Activated naive CD4-positive, alpha-beta T cell treated with anti-CD3 and anti-CD28 coated beads, Interleukin-2, amount 10 ng/mL, durations not matched to agents 7 days and 5 days (primary cell): ENCODE measurements at regions of chr1 and their contacts with region 1.

Region 1: GRCh38 chr1:156129706-156130581 is 15.4 kb downstream of the LMNA start:
- DNase-seq: peak; percentile 87
- H3K4me3 Mint-ChIP-seq: no peak overlapping the region
- H3K27ac Mint-ChIP-seq: no peak overlapping the region
- H3K4me1 Mint-ChIP-seq: peaks cover 51% of the 10 kb centered on the region
- H3K27me3 Mint-ChIP-seq: peaks cover 54% of the 10 kb centered on the region

Region 2: DNA sequence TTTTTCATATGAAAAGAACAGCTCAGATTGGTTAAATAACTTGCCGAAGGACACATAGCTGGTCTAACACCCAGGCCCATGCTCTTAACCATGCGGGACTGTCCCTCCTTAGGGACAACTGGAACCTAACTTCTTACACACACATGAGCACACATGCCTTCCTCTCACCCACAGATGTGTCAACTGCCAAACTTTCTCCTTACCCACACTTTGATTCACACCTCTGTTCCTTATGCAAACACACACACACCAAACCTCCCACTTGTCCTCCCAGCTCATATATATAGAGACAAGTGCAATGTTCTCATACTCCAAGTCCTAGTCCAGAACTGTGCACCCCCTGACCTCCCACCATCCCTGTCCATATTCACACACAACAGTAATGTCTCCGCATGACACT is 64.7 kb before region 1 on chr1:
- CTCF ChIA-PET with region 1: interaction called, 12 read pairs
- DNase-seq: no peak
- H3K4me3 Mint-ChIP-seq: no peak overlapping the region
- H3K27ac Mint-ChIP-seq: no peak overlapping the region
- H3K4me1 Mint-ChIP-seq: peaks cover 8% of the 10 kb centered on the region
- H3K27me3 Mint-ChIP-seq: peaks cover 12% of the 10 kb centered on the region

Region 3: DNA sequence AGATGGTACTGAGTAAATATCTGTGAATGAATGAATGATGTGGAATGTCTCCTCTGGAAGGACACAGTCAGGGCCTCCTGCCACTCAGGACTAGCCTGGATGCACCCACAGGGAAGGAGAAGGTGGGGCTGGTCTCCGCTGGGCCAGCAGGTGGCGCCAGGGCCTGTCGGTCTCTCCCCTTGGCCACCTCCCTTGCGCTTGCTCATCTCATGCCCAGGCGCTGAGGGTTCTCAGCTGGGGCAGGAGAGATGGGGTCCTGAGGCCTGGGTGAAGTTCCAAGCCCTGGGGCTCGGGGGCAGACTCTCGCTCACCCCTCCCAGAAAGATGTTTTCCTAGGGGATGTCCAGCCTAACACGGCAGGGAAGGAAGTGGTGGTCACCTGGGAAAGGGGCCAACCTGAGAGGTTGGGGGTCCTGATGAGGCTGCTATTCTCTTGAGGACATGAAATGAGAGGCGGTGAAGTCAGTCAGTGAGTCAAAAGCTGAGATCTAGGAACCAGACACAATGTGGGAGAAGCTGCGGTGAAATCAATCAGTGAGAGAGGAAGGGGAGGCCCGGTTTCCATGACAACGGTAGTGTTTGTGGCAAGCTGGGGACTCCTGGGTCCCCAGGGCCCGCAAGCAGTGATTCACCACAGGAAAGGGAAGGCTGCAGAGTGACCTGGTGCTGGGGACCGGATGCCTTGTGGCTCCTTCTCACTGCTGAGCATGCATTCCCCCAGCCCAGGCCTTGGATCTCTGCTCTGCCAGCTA is 33.1 kb before region 1 on chr1:
- CTCF ChIA-PET with region 1: interaction called, 668 read pairs
- DNase-seq: peak; percentile 87
- H3K4me3 Mint-ChIP-seq: peak overlapping the region; percentile 22
- H3K27ac Mint-ChIP-seq: peak overlapping the region; percentile 25
- H3K4me1 Mint-ChIP-seq: peaks cover 20% of the 10 kb centered on the region
- H3K27me3 Mint-ChIP-seq: peaks cover 88% of the 10 kb centered on the region

Region 4: GRCh38 chr1:156114101-156114916 is 15.6 kb before region 1 on chr1 and contains the start of gene LMNA:
- CTCF ChIA-PET with region 1: interaction called, 12 read pairs
- DNase-seq: peak; percentile 65
- H3K4me3 Mint-ChIP-seq: peak within 1 kb of the TSS; percentile 76
- H3K27ac Mint-ChIP-seq: no peak within 1 kb of the TSS
- H3K4me1 Mint-ChIP-seq: peaks cover 30% of the 10 kb centered on the region
- H3K27me3 Mint-ChIP-seq: peaks cover 91% of the 10 kb centered on the region